ENCODE measurements at regions of chr7 and their contacts with region 1.

Region 1: DNA sequence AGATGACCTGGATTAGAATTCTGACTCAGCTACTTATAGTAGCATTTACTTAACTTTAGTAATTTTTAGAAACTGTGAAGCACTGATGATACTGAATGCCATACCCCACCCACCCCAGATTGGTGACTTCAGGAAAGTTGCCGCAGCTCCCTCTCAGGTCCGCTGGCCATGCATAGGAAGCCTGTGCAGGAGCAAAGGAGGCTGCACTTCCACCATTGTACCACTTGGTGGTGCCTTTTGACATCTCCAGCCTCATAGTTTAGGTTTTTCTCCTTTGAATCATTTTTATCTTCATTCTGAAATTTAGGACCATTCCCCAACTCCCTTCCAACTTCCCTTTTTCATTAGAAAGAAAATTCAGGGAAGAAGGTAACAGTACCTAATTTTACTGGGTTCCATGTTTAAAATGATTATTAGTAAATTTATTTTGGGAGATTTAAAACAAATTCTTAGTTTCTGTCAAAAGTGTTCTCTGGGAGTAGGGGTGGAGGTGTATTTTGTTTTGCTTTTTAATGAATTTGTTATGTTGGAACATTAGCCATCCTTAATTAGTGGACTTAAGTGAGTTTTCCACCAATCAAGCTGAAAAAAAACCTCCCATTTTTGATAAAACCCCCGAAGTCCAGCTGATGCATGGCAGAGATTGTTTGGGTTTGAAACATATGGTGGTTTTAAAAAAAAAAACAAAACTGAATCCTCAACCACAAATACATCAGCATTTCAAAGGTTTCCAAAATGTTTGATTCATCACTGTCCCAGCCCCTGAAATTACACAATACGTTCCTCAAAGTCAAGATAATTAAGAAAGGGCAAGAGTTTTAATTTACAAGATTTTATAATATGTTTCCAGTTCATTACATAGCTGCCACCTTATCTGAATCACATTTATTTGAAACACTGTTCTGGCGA is 109.6 kb downstream of the WNT2 start:
- ATAC-seq: peak in 4 of 8 experiments; percentile 6 to 53 (median 28)
- H3K4me3 ChIP-seq: no peak overlapping the region
- H3K27ac ChIP-seq: no peak overlapping the region
- H3K4me1 ChIP-seq: peaks cover 0 to 18% of the 10 kb centered on the region in 2 donors

Region 2: GRCh38 chr7:117385340-117386109 is 172.3 kb after region 1 on chr7:
- in situ Hi-C with region 1: loop called in 1 of 9 experiments (anchors 25 kb)
- ATAC-seq: peak in 4 of 8 experiments; percentile 28 to 90 (median 87)
- H3K4me3 ChIP-seq: no peak overlapping the region
- H3K27ac ChIP-seq: no peak overlapping the region
- H3K4me1 ChIP-seq: no peaks in the 10 kb centered on the region